Activated CD8-positive, alpha-beta memory T cell treated with anti-CD3 and anti-CD28 coated beads, Interleukin-2, amount 10 ng/mL, durations not matched to agents 7 days and 5 days (primary cell): ENCODE measurements at regions of chr19 and their contacts with region 1.

Region 1: GRCh38 chr19:42283143-42284065 is 14.4 kb downstream of the CIC start:
- DNase-seq: peak; percentile 97
- ATAC-seq: peak; percentile 71
- H3K4me3 Mint-ChIP-seq: no peak overlapping the region
- H3K27ac Mint-ChIP-seq: no peak overlapping the region
- H3K4me1 Mint-ChIP-seq: peaks cover 32% of the 10 kb centered on the region
- H3K27me3 Mint-ChIP-seq: no peaks in the 10 kb centered on the region

Region 2: GRCh38 chr19:42184401-42184861 is 99.0 kb before region 1 on chr19:
- CTCF ChIA-PET with region 1: interaction called, 10 read pairs
- DNase-seq: peak; percentile 81
- ATAC-seq: peak; percentile 78
- H3K4me3 Mint-ChIP-seq: peak overlapping the region; percentile 5
- H3K27ac Mint-ChIP-seq: peak overlapping the region; percentile 87
- H3K4me1 Mint-ChIP-seq: peaks cover 39% of the 10 kb centered on the region
- H3K27me3 Mint-ChIP-seq: peaks cover 8% of the 10 kb centered on the region

Region 3: DNA sequence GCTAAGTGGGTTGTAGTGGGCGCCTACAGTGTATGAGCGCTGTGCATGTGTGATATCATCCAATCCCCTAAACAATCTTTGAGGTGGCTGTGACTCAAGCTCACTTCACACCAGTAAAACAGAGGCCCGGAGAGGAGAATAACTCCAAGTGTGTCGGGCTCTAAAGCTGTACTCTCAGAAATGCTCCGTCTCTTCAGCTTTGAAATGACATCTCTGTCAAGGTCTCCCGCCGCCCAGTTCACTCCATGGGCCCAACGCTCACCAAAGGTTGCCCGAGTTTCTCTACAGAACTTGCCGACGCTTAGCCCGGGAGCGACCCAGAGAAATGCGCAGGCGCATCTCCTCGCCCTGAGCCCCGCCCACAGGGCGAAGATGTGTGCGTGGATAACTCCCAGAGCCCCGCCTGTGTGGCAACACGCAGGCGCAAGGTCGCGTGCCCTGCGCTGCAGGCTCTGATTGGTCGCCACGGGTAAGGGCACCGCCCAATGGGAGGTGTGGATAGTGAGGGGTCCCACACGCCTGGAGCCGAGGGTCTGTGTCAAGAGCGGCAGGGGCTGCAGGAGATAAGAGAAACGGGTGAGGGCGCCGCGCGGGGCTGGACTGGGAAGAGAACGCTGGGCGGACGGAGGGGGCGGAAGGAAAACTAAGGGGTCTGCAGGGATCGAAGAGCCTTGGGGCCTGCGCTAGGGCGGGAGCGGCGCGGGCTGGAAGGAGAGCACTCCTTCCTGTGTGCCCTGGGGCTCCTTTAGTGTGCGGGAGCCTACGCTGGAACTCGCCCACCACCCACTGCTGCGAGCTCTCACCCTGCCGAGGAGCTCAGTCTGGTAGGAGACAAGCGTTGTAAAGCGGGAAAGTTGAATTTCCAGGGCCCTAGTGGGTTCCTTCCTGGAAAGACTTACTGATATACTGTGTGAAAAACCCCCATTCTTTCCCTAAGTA is 63.3 kb before region 1 on chr19 and contains the start of gene ZNF526:
- CTCF ChIA-PET with region 1: interaction called, 10 read pairs
- DNase-seq: peak; percentile 99
- ATAC-seq: peak; percentile 87
- H3K4me3 Mint-ChIP-seq: peak within 1 kb of the TSS; percentile 98
- H3K27ac Mint-ChIP-seq: peak within 1 kb of the TSS; percentile 94
- H3K4me1 Mint-ChIP-seq: peaks cover 65% of the 10 kb centered on the region
- H3K27me3 Mint-ChIP-seq: no peaks in the 10 kb centered on the region
- total RNA-seq, gene ZNF526: 21.9 to 24.4 TPM

Region 4: DNA sequence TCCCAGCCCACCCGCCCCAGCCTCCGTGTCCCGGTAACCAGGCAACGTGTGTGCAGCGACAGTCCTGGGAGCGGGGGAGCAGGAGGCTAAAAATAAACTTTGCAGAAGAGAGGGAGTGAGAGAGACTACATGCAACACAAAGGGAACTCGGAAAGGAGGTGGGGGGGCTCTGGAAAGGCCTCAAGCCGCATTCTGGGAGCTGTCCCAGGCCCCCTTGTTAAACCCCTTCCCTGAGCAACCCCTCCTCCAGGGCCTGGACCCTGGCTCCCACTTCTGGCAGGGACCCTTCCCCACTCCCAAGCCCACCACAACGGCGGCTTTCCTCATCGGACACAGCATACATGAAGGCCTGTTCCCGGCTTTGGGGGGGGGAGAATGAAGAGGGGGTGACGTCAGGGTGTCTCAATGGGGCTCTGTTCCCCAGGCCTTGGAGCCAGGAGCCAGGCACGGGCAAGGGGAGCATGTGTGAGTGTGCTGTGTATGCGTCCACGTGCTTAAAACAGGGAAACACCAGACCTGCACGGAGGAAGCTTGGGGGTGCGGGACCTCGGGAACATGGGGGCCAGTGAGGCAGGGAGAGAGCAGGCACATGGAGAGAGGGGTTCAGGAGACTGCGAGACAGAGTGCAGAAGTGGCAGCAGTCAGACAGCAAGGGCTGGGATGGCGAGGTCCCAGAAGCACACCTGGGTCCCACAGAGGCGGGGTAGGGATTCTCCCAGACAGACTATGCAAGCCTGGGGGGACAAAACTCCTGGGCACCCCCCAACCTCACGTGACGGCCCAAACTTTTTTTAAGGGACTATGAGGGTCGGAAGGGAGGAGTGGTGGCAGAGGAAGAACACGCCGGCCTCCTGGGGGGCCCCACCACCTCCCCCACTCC is 30.8 kb before region 1 on chr19:
- CTCF ChIA-PET with region 1: interaction called, 87 read pairs
- DNase-seq: peak; percentile 43
- ATAC-seq: no peak
- H3K4me3 Mint-ChIP-seq: peak overlapping the region; percentile 82
- H3K27ac Mint-ChIP-seq: peak overlapping the region; percentile 88
- H3K4me1 Mint-ChIP-seq: peaks cover 29% of the 10 kb centered on the region
- H3K27me3 Mint-ChIP-seq: peaks cover 8% of the 10 kb centered on the region

Region 5: GRCh38 chr19:42295831-42296525 is 12.6 kb after region 1 on chr19:
- CTCF ChIA-PET with region 1: interaction called, 19 read pairs
- DNase-seq: peak; percentile 92
- ATAC-seq: peak; percentile 85
- H3K4me3 Mint-ChIP-seq: no peak overlapping the region
- H3K27ac Mint-ChIP-seq: peak overlapping the region; percentile 40
- H3K4me1 Mint-ChIP-seq: peaks cover 2% of the 10 kb centered on the region
- H3K27me3 Mint-ChIP-seq: no peaks in the 10 kb centered on the region